Heart left ventricle (tissue), 16 donors: ENCODE measurements at regions of chr12 and their contacts with region 1.

Region 1: GRCh38 chr12:101830367-101831325 is at the start of gene GNPTAB:
- DNase-seq: peak; percentile 92 to 97 (median 94)
- ATAC-seq: peak; percentile 96 to 98 (median 98)
- H3K4me3 ChIP-seq: peak within 1 kb of the TSS; percentile 67 to 99 (median 81)
- H3K27ac ChIP-seq: peak within 1 kb of the TSS in 11 of 12 donors; percentile 74 to 90 (median 84)
- H3K4me1 ChIP-seq: peaks cover 0 to 45% (median 22%) of the 10 kb centered on the region in 12 donors
- H3K27me3 ChIP-seq: no peaks in the 10 kb centered on the region
- CTCF ChIP-seq: peak; percentile 60 to 95 (median 78)
- POLR2A ChIP-seq: no peak
- total RNA-seq, gene GNPTAB: 23.5 to 61.2 (median 45.9) TPM

Region 2: DNA sequence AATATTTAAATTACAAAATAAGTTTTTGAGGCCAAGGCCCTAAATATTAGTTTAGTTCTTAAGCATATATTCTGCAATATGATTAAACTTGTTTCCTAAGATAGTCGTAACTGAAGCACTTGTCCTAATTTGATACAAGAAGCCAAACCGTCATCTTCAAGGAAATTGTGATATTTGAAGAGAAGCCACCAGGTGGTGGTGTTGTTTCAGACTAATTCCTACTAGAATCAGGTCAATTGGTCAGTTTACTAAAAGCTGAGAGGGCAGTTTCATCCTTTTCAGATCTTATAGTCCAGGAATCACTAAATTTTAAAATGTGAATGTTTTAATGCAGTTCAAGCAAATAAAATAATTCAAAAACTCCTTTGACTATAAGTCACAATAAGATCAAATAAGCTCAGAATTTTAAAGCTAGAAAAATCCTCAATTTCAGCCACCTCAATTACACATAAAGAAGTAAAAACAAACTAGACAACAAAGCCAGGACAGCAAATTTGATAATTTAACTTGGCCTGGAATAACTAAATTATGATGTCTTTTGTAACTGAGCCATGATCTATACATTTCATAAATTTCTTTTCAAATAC is 416.0 kb before region 1 on chr12:
- intact Hi-C with region 1: loop called in 7 of 10 experiments (anchors 5 to 10 kb)
- DNase-seq: peak in 1 of 5 donors; percentile 14
- ATAC-seq: no peak
- H3K4me3 ChIP-seq: no peak overlapping the region
- H3K27ac ChIP-seq: no peak overlapping the region
- H3K4me1 ChIP-seq: no peaks in the 10 kb centered on the region
- H3K27me3 ChIP-seq: no peaks in the 10 kb centered on the region
- CTCF ChIP-seq: peak; percentile 33 to 64 (median 51)
- POLR2A ChIP-seq: no peak

Region 3: GRCh38 chr12:101685092-101685491 is 145.6 kb before region 1 on chr12:
- intact Hi-C with region 1: no loop called
- DNase-seq: no peak
- ATAC-seq: no peak
- H3K4me3 ChIP-seq: no peak overlapping the region
- H3K27ac ChIP-seq: no peak overlapping the region
- H3K4me1 ChIP-seq: peaks cover 0 to 12% (median 1%) of the 10 kb centered on the region in 12 donors
- H3K27me3 ChIP-seq: no peaks in the 10 kb centered on the region
- CTCF ChIP-seq: no peak
- POLR2A ChIP-seq: no peak

Region 4: GRCh38 chr12:101697197-101697929 is 133.3 kb before region 1 on chr12 and contains the start of gene CHPT1:
- intact Hi-C with region 1: loop called in 2 of 10 experiments (anchors 5 kb)
- DNase-seq: peak; percentile 79 to 92 (median 90)
- ATAC-seq: peak; percentile 73 to 78 (median 76)
- H3K4me3 ChIP-seq: peak within 1 kb of the TSS; percentile 70 to 96 (median 90)
- H3K27ac ChIP-seq: peak within 1 kb of the TSS; percentile 86 to 98 (median 94)
- H3K4me1 ChIP-seq: peaks cover 0 to 47% (median 23%) of the 10 kb centered on the region in 12 donors
- H3K27me3 ChIP-seq: no peaks in the 10 kb centered on the region
- CTCF ChIP-seq: peak in 1 of 12 donors; percentile 4
- POLR2A ChIP-seq: peak; percentile 22 to 57
- total RNA-seq, gene CHPT1: 84.2 to 208 (median 98.9) TPM

Region 5: DNA sequence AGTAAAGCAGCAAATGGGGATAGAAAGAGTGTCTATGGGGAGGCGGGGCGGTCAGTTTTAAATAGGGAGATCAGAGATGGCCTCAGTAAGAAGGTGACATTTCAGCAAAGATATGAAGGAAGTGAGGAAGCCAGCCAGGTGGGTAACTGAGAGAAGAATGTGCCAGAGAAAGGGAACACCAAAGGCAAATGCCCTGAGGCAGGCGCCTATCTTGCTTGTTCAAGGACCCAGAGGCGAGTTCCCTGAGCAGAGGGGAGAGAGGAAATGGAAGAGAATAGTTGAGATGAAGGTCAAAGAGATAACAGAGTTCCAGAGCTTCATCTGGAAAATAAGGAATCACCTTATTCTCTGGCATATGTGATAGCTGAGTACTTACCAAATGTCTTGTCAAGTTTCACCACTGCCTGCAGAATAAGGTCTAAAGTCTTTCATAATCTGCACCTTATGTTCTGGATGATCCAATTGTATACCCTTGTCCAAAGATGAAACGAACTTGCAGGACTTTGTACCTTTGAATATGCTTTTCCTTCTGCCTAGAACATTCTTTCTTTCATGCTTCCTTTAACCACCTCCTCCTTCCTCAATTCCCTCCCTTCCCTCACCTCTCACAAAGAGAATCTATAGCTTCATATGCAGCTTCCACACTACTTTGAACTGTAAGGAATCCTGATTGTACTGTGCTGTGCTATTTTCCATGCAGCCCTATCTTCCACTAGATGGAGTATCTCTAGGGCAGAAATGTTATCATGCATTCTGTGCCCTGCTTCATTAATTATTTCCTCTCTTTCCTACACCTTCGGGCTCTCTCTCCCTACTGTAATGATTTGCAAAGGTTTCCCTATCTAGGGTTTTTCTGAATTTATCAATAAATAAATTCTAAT is 38.4 kb before region 1 on chr12:
- intact Hi-C with region 1: loop called in 2 of 10 experiments (anchors 2 to 5 kb)
- DNase-seq: no peak
- ATAC-seq: peak in 2 of 4 donors; percentile 59
- H3K4me3 ChIP-seq: no peak overlapping the region
- H3K27ac ChIP-seq: no peak overlapping the region
- H3K4me1 ChIP-seq: peaks cover 0 to 21% (median 0%) of the 10 kb centered on the region in 12 donors
- H3K27me3 ChIP-seq: no peaks in the 10 kb centered on the region
- CTCF ChIP-seq: peak in 9 of 12 donors; percentile 6 to 49 (median 33)
- POLR2A ChIP-seq: no peak